ENCODE measurements at regions of chr19 and their contacts with region 1.

Region 1: DNA sequence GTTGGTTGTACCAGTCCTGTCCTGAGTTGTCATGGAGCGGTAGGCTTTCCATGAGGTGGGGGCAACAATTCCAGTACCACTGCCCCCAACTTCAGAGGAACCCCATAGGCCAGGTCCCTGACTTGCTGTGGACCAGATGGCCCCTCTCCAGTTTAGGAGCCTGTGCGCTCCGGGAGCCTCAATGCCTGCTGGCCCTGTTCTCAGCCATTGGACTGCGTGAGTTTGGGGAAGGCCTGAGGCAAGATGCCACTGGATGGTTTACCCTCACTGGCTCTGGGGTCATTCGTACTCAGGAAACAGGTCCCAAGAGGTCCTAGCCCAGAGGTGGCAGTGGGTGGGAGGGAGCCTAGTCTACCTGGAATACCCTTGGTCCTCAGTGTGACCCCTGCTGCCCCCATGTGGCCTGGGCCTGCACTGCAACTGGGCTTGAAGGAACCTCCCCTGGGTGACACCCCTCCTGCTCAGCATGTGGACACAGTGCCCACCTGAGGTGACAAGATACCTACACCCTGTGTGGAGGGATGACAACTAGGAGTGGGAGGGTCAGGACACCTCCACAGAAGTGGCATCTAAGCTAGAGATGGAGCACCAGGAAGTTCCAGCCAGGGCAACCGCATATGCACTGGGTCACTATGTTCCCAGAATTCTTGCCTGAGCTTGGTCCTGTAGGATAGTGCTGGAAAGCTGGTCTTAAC is 6.0 kb upstream of the PRR19 start:
- DNase-seq: peak; percentile 92
- ATAC-seq: peak; percentile 98
- H3K4me3 Mint-ChIP-seq: no peak overlapping the region
- H3K27ac Mint-ChIP-seq: no peak overlapping the region
- H3K4me1 Mint-ChIP-seq: peaks cover 7% of the 10 kb centered on the region
- H3K27me3 Mint-ChIP-seq: no peaks in the 10 kb centered on the region
- CTCF ChIP-seq: peak; percentile 90

Region 2: DNA sequence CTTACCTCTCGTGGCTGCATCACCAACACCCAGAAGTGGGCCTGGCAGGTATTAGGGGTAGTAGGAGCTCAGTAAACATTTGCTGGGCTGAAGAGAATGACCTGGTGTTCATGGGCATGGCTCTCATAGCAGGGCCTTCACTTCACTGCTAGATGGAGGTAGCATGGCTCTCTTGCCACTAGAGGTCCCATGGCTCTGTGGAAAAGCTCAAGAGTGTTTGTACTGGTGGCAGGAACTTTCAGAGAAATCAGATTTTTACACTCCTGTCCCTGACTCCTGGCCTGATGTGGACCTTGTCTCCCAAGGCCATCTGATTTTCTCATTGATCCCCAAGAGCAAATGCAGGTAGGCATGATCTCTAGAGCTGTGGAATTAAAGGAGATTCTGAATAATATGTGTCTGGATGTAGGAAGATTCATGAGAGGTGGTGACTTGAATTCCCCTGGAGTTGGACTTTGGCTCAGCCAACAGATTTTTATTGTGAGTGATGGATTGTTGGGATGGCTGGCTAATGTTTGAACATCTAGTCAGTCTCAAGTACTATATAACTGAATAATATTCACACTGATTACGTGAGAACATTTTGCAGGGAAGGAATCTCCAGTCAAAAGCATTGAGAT is 214.3 kb before region 1 on chr19:
- CTCF ChIA-PET with region 1: interaction called, 3 read pairs
- POLR2A ChIA-PET with region 1: no interaction called
- intact Hi-C with region 1: loop called (anchors 1 kb)
- DNase-seq: no peak
- ATAC-seq: peak; percentile 51
- H3K4me3 Mint-ChIP-seq: no peak overlapping the region
- H3K27ac Mint-ChIP-seq: peak overlapping the region; percentile 5
- H3K4me1 Mint-ChIP-seq: peaks cover 35% of the 10 kb centered on the region
- H3K27me3 Mint-ChIP-seq: no peaks in the 10 kb centered on the region
- CTCF ChIP-seq: no peak

Region 3: DNA sequence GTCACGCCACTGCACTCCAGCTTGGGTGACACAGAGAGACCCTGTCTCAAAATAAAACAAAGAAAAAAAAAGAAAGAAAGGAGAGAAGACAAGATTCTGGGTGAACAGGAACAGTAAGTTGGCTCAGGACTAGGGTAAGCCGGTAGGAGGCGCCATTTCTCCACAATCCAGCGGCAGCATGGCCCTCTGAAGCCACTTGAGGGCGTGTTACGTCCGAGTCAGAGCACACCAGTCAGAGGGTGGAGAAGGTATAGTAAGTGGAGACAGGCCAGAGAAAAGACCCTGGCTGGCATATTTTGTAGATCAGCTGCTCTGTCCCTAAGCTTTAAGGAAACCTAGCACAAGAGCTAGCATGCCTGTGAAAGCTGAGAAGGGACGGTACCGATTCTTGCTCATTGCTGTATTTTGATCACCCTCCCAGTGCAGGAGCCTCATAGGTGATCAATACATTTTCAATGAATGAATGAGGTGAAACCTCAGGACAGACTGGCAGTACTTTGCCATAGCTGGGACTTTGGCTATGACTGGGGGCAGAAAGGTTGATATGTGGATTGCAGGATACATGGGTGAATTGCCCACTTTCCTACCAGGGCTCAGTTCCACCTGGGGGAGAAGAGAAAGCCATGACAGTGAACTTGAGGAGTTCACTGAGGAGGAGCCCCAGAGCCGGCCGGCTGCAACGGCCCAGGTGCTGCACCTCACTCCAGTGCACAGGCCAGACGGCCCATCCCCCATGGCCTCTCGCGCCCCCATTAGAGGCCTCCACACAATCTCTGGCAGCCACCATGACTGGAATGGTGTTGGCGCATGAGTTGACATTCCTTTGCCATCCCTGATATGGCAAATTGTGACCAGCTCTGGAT is 187.2 kb before region 1 on chr19:
- CTCF ChIA-PET with region 1: no interaction called
- POLR2A ChIA-PET with region 1: no interaction called
- intact Hi-C with region 1: loop called (anchors 1 kb)
- DNase-seq: peak; percentile 76
- ATAC-seq: peak; percentile 92
- H3K4me3 Mint-ChIP-seq: peak overlapping the region; percentile 47
- H3K27ac Mint-ChIP-seq: peak overlapping the region; percentile 81
- H3K4me1 Mint-ChIP-seq: peaks cover 69% of the 10 kb centered on the region
- H3K27me3 Mint-ChIP-seq: no peaks in the 10 kb centered on the region
- CTCF ChIP-seq: peak; percentile 99

Region 4: DNA sequence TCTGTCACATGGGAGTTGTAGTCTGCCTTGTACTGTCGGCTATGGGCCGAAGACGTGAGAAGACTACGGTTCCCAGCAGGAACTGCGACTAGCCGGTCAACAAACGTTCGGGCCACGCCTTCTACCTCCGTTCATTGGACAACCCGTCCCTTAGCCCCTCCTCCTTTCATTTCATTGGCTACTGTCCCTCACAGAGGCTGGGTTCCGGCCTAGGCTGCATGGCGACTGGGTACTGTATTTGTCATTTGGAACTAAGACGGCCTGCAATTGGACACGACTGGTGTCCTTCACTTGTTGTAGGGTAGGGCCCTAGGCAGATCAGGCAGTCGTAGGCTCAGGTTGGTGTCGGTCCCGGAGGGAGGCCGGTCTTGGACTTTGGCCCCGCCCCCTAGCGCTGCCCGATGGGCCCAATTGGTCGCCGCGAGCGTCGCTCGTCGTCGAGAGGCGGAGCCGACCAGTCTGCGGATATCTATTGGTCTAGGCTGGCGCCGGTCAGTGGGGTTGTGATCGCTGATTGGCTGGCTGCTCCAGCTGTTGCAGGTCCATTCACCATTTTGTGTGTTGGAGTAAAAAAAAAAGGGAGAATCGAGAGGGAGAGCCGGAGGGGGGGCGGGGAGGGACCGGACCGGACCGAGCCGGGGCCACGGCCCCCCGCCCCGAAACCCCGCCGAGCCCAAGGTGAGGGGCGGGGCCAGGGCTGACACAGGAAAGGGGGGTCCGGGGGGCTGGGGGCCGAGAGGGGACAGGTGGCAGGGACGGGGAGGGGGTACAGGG is 27.1 kb before region 1 on chr19 and contains the start of gene CIC:
- CTCF ChIA-PET with region 1: no interaction called
- POLR2A ChIA-PET with region 1: no interaction called
- intact Hi-C with region 1: loop called (anchors 1 kb)
- DNase-seq: peak; percentile 95
- ATAC-seq: peak; percentile 81
- H3K4me3 Mint-ChIP-seq: peak within 1 kb of the TSS; percentile 88
- H3K27ac Mint-ChIP-seq: peak within 1 kb of the TSS; percentile 94
- H3K4me1 Mint-ChIP-seq: peaks cover 31% of the 10 kb centered on the region
- H3K27me3 Mint-ChIP-seq: no peaks in the 10 kb centered on the region
- CTCF ChIP-seq: no peak
- total RNA-seq, gene CIC: 85.4 and 96.5 TPM in 2 replicates

Measured in activated B cell treated with CpG ODN at 0.5 μM for 24 hours (primary cell).